ENCODE measurements at regions of chr16 and their contacts with region 1.

Region 1: GRCh38 chr16:27639561-27640276 is 89.8 kb downstream of the KATNIP start:
- DNase-seq: no peak
- ATAC-seq: peak; percentile 71

Region 2: GRCh38 chr16:27582883-27583282 is 56.8 kb before region 1 on chr16:
- intact Hi-C with region 1: no loop called
- DNase-seq: no peak
- ATAC-seq: no peak

Region 3: DNA sequence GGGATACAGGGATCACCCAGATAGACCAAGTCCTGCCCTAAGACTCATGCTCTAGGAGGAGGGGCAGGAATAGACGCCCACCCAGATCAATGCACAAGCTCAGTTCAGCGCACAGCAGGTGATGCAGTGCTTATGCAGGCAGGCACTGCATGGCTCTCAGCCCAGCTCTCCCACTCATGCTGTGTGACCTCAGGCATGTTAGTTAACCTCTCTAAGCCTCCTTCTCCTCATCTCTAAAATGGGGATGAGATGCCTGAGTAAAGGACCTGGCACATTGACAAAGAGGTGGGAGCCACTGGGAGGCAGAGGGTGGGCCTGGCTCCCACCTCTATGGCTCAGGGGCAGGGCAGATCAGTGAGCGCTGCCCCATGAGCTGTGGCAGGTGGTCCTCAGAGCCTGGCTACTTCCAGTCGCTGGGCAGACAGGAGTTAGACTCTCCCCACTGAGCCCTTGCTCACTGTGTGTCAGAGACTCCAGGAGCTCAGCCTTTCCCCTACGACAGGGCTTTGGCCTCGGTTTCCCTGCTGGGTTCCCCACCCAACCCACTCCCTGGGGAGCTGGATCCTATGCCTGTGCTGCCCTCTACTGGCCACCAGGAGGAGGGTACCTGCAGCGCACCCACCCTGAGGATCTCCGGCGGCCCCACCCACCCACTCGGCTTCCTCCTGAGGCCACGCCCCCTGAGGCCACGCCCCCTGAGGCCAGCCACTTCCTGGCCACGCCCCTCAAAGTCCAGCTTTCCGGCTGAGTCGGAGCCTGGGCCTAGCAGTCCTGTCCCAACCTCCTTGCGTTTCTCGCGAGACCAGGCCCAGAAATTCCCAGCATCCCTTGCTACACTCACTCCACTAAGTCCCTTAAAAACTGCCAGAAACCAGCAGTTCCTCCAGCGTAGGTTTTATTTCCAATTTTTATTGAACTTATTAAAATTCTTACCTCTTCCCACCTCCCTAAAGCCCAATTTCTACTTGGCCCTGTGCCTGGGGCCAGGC is 227.7 kb after region 1 on chr16:
- intact Hi-C with region 1: loop called (anchors 5 kb)
- DNase-seq: no peak
- ATAC-seq: peak; percentile 73

Region 4: DNA sequence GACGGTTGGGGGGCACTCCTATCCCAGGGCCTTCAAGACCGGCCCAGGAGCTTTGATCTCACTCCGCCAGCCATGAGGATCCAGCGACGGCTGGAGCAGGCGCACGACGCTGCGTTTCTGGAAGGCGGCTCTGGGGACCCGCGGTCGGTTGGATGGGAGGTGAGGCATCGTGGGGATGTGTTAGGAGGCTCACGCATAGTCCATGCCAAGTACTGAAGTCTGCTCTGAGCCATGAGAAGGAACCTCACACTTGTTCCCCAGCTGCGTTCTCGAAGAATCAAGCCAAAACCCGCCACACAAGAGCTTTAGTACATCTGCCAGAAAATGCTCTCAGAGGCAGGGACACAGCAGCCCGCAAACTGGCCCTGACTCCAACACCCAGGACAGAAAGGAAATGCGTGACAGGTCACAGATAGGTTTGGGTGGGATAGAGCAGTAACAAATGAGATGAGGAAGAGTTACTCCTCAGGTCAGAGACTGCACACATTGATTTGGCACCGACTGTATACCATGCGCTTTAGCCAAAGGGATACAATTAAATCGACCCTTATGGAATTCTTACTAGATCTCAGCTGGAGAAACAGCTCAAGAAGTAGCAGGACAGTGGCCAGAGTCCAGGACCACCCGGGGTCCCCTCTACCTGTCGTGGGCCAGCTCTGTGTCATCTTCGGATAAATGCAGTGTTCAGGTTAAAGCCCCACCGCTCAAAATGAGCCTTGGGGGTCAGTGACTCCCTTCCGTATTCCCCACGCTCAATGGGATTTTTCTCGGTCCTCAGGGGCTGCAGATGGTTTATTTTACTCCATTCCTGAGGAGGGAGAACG is 430.5 kb after region 1 on chr16:
- intact Hi-C with region 1: loop called (anchors 5 kb)
- DNase-seq: no peak
- ATAC-seq: peak; percentile 21

Measured in Right ventricle myocardium inferior (tissue), 1 donor.